Activated B cell treated with CpG ODN at 0.5 μM for 24 hours (primary cell): ENCODE measurements at regions of chr2 and their contacts with region 1.

Region 1: GRCh38 chr2:165953655-165954606 is at the start of gene TTC21B:
- DNase-seq: peak; percentile 92
- ATAC-seq: peak; percentile 96
- H3K4me3 Mint-ChIP-seq: no peak within 1 kb of the TSS
- H3K27ac Mint-ChIP-seq: peak within 1 kb of the TSS; percentile 56
- H3K4me1 Mint-ChIP-seq: peaks cover 11% of the 10 kb centered on the region
- H3K27me3 Mint-ChIP-seq: no peaks in the 10 kb centered on the region
- CTCF ChIP-seq: no peak
- total RNA-seq, gene TTC21B: 24.9 and 29.2 TPM in 2 replicates

Region 2: GRCh38 chr2:165203689-165204559 is 750.0 kb before region 1 on chr2 and contains the start of gene SCN3A:
- CTCF ChIA-PET with region 1: no interaction called
- POLR2A ChIA-PET with region 1: no interaction called
- intact Hi-C with region 1: loop called (anchors 5 kb)
- DNase-seq: no peak
- ATAC-seq: peak; percentile 57
- H3K4me3 Mint-ChIP-seq: peak within 1 kb of the TSS; percentile 80
- H3K27ac Mint-ChIP-seq: peak within 1 kb of the TSS; percentile 73
- H3K4me1 Mint-ChIP-seq: peaks cover 29% of the 10 kb centered on the region
- H3K27me3 Mint-ChIP-seq: no peaks in the 10 kb centered on the region
- CTCF ChIP-seq: no peak
- total RNA-seq, gene SCN3A: 2.2 and 2.6 TPM in 2 replicates

Region 3: DNA sequence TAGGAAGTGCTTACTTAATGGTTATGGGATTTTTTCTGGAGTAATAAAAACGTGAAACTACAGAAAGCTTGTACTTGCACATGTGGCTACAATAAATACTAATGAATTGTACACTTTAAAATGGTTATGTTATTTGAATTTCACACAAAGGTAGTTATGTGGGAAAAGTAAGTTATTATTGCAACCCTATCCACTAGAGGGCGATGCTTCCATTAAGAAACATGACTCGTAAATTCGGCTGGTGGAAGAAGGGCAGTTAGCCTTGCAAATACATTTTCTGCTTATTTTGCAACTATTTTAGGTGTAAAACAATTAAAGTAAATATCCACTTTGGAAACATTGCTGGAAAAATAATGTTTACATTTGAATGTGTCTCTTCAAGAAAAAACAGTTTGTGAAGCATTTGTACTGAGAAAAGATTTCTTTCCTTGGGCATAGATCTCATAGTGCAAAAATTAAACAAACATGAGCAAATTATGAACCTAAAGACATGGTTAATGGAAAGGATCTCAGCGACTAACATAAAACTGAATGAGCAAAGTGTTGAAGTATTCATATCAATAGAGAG is 552.6 kb before region 1 on chr2:
- CTCF ChIA-PET with region 1: no interaction called
- POLR2A ChIA-PET with region 1: no interaction called
- intact Hi-C with region 1: loop called (anchors 5 kb)
- DNase-seq: no peak
- ATAC-seq: no peak
- H3K4me3 Mint-ChIP-seq: no peak overlapping the region
- H3K27ac Mint-ChIP-seq: no peak overlapping the region
- H3K4me1 Mint-ChIP-seq: no peaks in the 10 kb centered on the region
- H3K27me3 Mint-ChIP-seq: peaks cover 13% of the 10 kb centered on the region
- CTCF ChIP-seq: peak; percentile 45

Region 4: DNA sequence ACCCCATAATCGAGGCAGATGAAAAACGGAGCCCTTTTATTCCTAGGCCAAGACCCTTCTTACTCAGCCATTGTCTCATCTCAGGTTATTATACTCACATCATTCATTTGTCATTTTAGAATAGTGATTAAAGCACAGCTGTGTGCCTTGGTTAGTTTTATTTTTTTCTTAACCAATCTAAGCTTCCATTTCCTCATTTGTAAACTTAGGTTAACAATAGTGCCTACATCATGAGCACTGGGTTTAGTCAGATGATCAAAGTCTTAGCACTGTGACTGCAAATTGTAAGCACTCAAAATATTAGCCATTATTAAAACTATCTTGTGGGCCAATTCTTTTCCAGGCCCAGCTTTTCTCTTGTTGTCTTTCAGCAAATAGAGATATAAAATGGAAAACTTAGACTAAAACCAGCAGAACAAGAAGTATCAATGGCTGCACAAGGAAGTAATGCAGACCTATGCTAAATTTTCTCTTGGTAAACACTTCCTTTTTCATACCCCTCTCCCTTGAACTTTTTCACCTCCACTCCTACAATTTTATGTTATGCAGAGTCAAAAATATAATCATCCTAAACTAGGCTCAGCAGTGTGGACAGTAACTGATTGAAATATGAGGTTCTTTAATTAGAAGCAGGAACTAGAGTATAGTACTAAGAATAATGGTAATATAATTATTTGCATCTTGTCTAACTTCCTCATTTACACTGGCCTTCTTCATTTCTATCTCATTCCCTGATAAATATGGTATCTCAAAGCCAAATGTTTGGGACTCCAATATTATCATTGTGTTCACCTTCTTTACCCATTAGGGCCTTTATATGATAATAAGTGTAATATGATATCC is 138.4 kb before region 1 on chr2:
- CTCF ChIA-PET with region 1: no interaction called
- POLR2A ChIA-PET with region 1: no interaction called
- intact Hi-C with region 1: loop called (anchors 1 kb)
- DNase-seq: no peak
- ATAC-seq: peak; percentile 74
- H3K4me3 Mint-ChIP-seq: peak overlapping the region; percentile 56
- H3K27ac Mint-ChIP-seq: peak overlapping the region; percentile 84
- H3K4me1 Mint-ChIP-seq: peaks cover 58% of the 10 kb centered on the region
- H3K27me3 Mint-ChIP-seq: no peaks in the 10 kb centered on the region
- CTCF ChIP-seq: no peak

Region 5: GRCh38 chr2:166000401-166000800 is 46.5 kb after region 1 on chr2:
- CTCF ChIA-PET with region 1: no interaction called
- POLR2A ChIA-PET with region 1: no interaction called
- intact Hi-C with region 1: no loop called
- DNase-seq: no peak
- ATAC-seq: no peak
- H3K4me3 Mint-ChIP-seq: no peak overlapping the region
- H3K27ac Mint-ChIP-seq: no peak overlapping the region
- H3K4me1 Mint-ChIP-seq: no peaks in the 10 kb centered on the region
- H3K27me3 Mint-ChIP-seq: peaks cover 7% of the 10 kb centered on the region
- CTCF ChIP-seq: no peak